ENCODE measurements at regions of chr1 and their contacts with region 1.

Region 1: DNA sequence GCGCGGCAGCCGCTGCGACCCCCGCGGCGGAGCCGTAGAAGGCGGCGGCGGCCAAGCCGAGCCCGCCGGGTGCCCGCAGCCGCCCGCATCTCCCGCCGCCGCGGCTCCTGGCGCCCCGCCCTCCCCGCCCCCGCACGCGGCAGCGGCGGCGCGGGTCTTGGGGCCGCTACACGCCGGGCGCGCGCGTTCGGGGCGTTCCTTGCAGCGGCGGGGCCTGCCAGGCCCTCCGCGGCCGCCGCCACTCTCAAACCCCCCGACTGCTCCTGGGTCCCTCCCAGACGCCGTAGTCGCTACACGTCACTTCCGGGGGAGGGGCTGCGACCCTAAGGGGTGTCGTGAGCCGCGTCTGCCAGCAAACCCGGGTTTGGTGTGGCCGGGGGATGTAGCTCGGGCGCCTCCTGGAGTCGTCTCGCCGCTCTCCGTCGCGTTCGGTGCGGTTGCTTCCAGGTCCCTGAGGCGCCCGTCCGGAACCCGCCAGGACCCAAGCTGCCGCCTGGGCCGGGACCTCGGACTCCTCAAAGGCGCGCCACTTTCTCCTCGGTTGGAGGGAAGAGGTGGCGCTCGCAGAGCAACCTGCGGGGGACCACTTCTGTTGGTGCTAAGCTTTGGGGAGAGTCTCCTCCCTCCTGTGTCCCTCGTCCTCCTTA is at the start of gene ELK4:
- DNase-seq: peak; percentile 94
- H3K4me3 ChIP-seq: peak within 1 kb of the TSS; percentile 79
- H3K27ac ChIP-seq: peak within 1 kb of the TSS; percentile 97
- H3K27me3 ChIP-seq: no peaks in the 10 kb centered on the region
- CTCF ChIP-seq: peak; percentile 66
- polyA plus RNA-seq, gene ELK4: 8.3 and 8.6 TPM in 2 replicates

Region 2: DNA sequence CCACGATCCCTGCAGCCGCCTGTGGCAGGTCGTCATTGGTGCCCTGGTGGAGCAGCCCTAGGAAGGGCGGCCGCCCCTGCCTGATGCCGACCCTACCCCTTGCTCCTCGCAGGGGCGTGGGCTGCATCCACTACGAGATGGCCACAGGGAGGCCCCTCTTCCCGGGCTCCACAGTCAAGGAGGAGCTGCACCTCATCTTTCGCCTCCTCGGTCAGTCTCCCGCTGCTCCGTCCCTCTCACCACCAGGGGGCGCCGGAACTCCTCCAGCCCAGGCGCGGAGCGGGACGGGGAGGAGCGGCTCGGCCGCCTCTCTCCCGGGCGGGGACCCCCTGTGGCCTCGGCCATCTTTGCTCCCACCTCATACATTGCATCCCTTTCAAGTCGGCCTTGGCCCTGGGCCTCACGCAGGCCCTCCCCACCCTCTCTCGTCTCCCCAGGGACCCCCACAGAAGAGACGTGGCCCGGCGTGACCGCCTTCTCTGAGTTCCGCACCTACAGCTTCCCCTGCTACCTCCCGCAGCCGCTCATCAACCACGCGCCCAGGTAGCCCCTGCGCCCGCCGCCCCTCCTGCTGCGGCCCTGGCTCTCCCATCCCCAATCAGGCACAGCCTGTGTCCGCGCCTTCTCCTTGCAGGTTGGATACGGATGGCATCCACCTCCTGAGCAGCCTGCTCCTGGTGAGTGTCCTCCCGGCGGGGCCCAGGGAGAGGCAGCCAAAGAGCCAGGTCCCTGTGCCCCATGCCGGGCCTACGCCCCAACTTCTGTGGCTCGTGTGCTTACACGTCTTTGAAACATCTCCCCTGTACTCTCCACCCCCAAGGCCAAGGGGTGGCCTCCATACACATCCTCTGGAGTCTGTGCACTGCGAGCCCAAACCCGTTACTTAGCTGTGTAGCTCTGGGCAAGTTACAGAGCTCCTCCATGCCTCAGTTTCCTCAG is 102.7 kb before region 1 on chr1:
- CTCF ChIA-PET with region 1: interaction called, 13 read pairs
- POLR2A ChIA-PET with region 1: no interaction called
- DNase-seq: peak; percentile 29
- H3K4me3 ChIP-seq: peak overlapping the region; percentile 50
- H3K27ac ChIP-seq: no peak overlapping the region
- H3K27me3 ChIP-seq: peaks cover 13% of the 10 kb centered on the region
- CTCF ChIP-seq: peak; percentile 85

Region 3: DNA sequence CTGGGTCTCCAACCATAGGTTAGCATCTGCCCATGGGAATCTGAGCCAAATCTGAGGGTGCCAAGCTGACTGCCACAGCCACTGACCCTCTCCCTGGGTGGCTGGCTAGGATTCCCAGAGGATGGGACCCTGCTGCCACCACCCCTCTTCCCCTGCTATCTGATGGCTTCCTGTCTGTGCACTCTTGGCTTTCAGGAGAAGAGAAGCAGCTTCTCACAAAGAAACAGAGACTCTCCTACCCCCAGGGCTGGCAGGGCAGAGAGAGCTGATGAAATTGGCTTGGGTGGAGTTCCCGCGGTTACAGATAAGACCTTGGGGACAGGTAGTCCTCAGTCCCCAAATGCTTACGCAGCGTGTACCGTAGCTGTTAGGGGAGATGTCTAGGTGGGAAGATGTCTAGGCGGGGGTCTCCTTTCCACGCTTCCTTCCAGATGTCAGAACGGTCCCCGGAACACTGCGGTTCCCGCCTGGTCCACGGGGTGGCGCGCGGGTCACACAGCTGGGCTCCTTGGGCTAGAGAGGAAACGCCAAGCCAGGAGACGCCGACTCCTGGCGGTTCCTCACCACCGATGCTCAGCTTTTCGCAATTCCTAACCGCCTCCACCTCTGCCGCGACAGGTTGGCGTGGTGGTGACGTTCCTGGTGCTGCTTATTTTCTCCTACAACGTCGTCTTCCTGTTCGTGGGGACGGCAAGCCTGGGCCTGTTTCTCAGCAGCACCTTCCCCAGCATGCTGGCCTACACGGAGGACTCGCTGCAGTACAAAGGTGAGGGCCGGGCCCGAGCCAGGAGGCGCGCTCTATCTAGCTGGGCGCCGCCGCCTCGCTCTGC is 40.1 kb before region 1 on chr1:
- CTCF ChIA-PET with region 1: interaction called, 100 read pairs
- POLR2A ChIA-PET with region 1: interaction called, 10 read pairs
- DNase-seq: no peak
- H3K4me3 ChIP-seq: peak overlapping the region; percentile 55
- H3K27ac ChIP-seq: no peak overlapping the region
- H3K27me3 ChIP-seq: no peaks in the 10 kb centered on the region
- CTCF ChIP-seq: peak; percentile 99

Region 4: DNA sequence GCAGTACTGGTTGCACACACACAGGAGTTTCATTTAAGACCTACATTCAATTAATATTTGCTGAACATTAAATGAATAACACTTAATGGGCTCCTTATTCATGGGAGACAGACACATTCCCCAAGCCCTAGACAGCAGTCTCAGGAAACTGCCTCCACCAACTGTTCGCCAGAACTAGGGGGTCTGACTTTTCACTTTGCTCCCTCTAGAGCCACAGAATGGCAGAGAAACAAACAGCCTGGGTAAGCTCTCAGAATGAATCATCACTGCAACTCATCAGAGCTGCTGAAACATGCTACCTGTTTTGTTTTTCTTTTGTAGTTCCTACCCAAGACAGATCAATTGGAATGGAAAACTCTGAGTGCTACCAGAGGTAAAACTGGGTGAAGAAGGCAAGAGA is 31.8 kb before region 1 on chr1:
- CTCF ChIA-PET with region 1: interaction called, 13 read pairs
- POLR2A ChIA-PET with region 1: interaction called, 7 read pairs
- DNase-seq: peak; percentile 38
- H3K4me3 ChIP-seq: no peak overlapping the region
- H3K27ac ChIP-seq: peak overlapping the region; percentile 93
- H3K27me3 ChIP-seq: no peaks in the 10 kb centered on the region
- CTCF ChIP-seq: peak; percentile 50

Region 5: DNA sequence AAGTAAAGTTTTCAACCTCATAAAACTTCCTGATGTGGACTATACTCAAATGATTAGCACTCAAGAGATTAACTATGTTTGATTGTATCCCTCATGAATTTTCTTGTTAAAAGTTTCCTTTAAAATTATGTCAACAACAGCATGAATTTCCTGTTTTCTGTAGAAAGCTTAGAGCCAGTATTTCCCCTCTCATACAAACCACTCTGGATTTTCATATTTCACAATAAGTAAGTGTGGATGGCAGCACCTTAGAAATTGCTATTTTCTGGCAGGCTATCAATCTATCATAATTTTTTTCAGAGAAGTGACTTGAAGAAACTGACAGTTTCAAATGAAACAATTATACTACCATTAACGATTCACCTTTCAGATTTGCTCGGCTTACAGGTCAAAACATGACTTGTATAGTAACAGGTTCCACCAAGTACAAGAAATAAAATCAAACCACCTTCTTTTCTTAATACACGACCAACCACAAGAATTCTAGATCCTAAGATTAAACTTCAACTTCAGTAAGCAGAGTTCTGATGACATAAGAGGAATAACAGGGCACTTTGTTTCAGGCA is 20.9 kb before region 1 on chr1:
- CTCF ChIA-PET with region 1: no interaction called
- POLR2A ChIA-PET with region 1: no interaction called
- DNase-seq: no peak
- H3K4me3 ChIP-seq: no peak overlapping the region
- H3K27ac ChIP-seq: no peak overlapping the region
- H3K27me3 ChIP-seq: no peaks in the 10 kb centered on the region
- CTCF ChIP-seq: no peak